ENCODE measurements at regions of chr11 and their contacts with region 1.

Region 1: DNA sequence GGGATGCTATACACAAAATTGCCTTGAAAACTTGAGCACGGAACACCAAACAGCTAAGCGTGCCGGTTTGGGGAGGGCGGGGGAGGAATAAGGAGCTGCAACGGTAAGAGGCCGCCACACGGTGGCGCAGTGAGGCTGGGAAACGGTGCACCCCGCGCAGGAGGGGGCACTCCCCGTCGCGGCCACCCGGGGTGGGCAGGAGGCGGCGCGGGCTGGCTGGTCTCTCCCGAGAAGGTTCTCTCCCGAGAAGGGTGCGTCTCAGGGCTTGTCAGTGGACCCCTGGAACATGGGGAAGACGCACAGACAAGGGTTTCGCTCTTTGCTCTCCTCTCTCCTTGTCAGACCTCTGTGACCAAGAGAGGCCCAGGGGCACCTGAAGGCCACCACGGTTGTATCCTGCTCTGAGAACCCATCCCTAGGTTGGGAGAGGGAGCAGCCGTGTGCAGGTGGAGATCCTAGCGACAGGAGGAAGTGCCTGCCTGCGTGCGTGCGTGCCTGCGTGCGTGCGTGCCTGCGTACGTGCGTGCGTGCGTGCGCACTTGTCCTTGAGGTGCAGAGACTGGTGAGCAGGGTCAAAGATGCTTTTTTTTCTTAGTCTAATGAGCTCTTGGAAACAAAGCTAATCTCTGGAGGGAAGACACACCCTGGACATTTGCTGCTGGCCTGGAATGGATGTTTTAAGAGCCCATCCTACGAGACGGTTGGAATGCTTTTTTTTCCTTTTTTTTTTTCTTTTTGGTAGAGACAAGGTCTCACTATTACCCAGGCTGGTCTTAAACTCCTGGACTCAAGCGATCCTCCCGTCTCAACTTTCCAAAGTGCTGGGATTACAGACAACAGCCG is 18.1 kb upstream of the JAM3 start:
- DNase-seq: peak; percentile 83
- ATAC-seq: peak; percentile 92
- H3K4me3 Mint-ChIP-seq: no peak overlapping the region
- H3K27ac Mint-ChIP-seq: no peak overlapping the region
- H3K4me1 Mint-ChIP-seq: peaks cover 23% of the 10 kb centered on the region
- H3K27me3 Mint-ChIP-seq: no peaks in the 10 kb centered on the region

Region 2: GRCh38 chr11:133927690-133928627 is 122.8 kb before region 1 on chr11:
- CTCF ChIA-PET with region 1: interaction called, 49 read pairs
- POLR2A ChIA-PET with region 1: interaction called, 3 read pairs
- DNase-seq: peak; percentile 77
- ATAC-seq: peak; percentile 84
- H3K4me3 Mint-ChIP-seq: peak overlapping the region; percentile 61
- H3K27ac Mint-ChIP-seq: peak overlapping the region; percentile 87
- H3K4me1 Mint-ChIP-seq: peaks cover 35% of the 10 kb centered on the region
- H3K27me3 Mint-ChIP-seq: no peaks in the 10 kb centered on the region

Region 3: GRCh38 chr11:134033696-134034491 is 16.9 kb before region 1 on chr11:
- CTCF ChIA-PET with region 1: interaction called, 42 read pairs
- POLR2A ChIA-PET with region 1: interaction called, 3 read pairs
- DNase-seq: peak; percentile 90
- ATAC-seq: peak; percentile 88
- H3K4me3 Mint-ChIP-seq: peak overlapping the region; percentile 56
- H3K27ac Mint-ChIP-seq: peak overlapping the region; percentile 85
- H3K4me1 Mint-ChIP-seq: peaks cover 73% of the 10 kb centered on the region
- H3K27me3 Mint-ChIP-seq: no peaks in the 10 kb centered on the region

Region 4: DNA sequence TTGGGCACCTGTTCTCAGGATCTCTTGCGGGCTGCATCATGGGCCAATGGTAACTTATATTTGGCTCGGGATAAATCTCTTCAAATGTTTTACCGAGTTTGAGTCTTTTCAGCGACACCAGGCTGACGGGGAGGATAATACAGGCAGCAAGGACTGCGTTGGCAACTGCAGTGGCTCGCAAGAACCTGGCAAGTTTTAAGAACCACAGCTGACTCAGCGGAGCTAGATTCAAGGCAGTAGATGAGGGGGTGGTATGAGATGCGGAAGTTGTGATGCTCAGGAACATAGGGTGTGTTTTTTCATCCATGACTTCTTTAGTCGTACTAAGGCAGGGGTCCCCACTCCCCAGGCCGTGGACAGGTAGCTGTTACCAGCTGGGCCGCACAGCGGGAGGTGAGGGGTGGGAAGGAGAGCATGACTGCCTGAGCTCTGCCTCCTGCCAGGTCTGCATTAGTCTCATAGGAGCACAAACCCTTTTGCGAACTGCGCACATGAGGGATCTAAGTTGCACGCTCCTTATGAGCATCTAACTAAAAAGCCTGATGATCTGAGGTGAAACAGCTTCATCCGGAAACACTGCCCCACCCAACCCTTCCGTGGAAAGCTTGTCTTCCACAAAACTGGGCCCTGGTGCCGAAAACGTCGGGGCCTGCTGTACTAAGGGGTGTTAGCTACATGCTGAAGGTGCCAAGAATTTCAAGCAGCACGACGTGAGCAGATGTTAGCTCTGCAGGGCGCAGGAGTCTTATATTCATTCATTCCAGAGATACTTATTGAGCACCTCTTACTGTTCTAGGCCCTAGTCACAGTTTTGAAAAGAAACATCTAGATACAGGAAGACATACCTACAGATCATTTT is 11.7 kb after region 1 on chr11:
- CTCF ChIA-PET with region 1: interaction called, 52 read pairs
- POLR2A ChIA-PET with region 1: no interaction called
- DNase-seq: no peak
- ATAC-seq: no peak
- H3K4me3 Mint-ChIP-seq: no peak overlapping the region
- H3K27ac Mint-ChIP-seq: no peak overlapping the region
- H3K4me1 Mint-ChIP-seq: peaks cover 30% of the 10 kb centered on the region
- H3K27me3 Mint-ChIP-seq: peaks cover 47% of the 10 kb centered on the region

Region 5: GRCh38 chr11:134098566-134099184 is 47.9 kb after region 1 on chr11:
- CTCF ChIA-PET with region 1: interaction called, 62 read pairs
- POLR2A ChIA-PET with region 1: no interaction called
- DNase-seq: no peak
- ATAC-seq: peak; percentile 76
- H3K4me3 Mint-ChIP-seq: no peak overlapping the region
- H3K27ac Mint-ChIP-seq: no peak overlapping the region
- H3K4me1 Mint-ChIP-seq: peaks cover 3% of the 10 kb centered on the region
- H3K27me3 Mint-ChIP-seq: peaks cover 3% of the 10 kb centered on the region

Region 6: GRCh38 chr11:134139873-134140331 is 89.1 kb after region 1 on chr11:
- CTCF ChIA-PET with region 1: interaction called, 39 read pairs
- POLR2A ChIA-PET with region 1: no interaction called
- DNase-seq: peak; percentile 70
- ATAC-seq: peak; percentile 64
- H3K4me3 Mint-ChIP-seq: no peak overlapping the region
- H3K27ac Mint-ChIP-seq: no peak overlapping the region
- H3K4me1 Mint-ChIP-seq: peaks cover 18% of the 10 kb centered on the region
- H3K27me3 Mint-ChIP-seq: no peaks in the 10 kb centered on the region

Region 7: GRCh38 chr11:134372964-134373363 is 322.2 kb after region 1 on chr11:
- CTCF ChIA-PET with region 1: no interaction called
- POLR2A ChIA-PET with region 1: no interaction called
- DNase-seq: no peak
- ATAC-seq: no peak
- H3K4me3 Mint-ChIP-seq: no peak overlapping the region
- H3K27ac Mint-ChIP-seq: no peak overlapping the region
- H3K4me1 Mint-ChIP-seq: no peaks in the 10 kb centered on the region
- H3K27me3 Mint-ChIP-seq: no peaks in the 10 kb centered on the region

Measured in activated CD8-positive, alpha-beta T cell treated with anti-CD3 and anti-CD28 coated beads, Interleukin-2, amount 10 ng/mL, durations not matched to agents 7 days and 5 days (primary cell).